ENCODE measurements at regions of chr17 and their contacts with region 1.

Region 1: DNA sequence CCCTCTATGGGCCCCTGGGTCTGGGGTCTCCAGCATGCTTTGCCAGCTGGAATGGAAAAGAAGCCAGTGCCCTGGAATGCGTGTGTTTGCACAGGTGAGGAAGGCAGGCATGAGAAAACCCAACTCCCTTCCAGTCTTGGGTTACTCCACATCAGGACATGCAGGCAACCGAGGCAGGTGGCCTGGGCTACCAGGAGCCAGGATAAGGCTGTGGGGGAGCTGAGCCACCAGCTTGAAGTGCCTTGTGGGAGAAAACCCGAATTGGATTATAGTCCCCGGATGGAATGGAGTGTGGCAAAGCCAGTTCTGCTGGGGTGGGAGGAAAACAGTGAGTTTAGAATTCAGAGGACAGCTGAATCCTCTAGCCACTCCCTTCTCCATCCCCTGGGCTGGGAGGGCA is 7.2 kb downstream of the SRCIN1 start:
- DNase-seq: peak; percentile 75

Region 2: GRCh38 chr17:38584350-38584925 is 14.1 kb before region 1 on chr17:
- CTCF ChIA-PET with region 1: interaction called, 11 read pairs
- POLR2A ChIA-PET with region 1: interaction called, 3 read pairs
- DNase-seq: peak; percentile 73

Measured in HEK293T (cell line).